Activated naive CD4-positive, alpha-beta T cell treated with anti-CD3 and anti-CD28 coated beads for 36 hours (primary cell): ENCODE measurements at regions of chr11 and their contacts with region 1.

Region 1: DNA sequence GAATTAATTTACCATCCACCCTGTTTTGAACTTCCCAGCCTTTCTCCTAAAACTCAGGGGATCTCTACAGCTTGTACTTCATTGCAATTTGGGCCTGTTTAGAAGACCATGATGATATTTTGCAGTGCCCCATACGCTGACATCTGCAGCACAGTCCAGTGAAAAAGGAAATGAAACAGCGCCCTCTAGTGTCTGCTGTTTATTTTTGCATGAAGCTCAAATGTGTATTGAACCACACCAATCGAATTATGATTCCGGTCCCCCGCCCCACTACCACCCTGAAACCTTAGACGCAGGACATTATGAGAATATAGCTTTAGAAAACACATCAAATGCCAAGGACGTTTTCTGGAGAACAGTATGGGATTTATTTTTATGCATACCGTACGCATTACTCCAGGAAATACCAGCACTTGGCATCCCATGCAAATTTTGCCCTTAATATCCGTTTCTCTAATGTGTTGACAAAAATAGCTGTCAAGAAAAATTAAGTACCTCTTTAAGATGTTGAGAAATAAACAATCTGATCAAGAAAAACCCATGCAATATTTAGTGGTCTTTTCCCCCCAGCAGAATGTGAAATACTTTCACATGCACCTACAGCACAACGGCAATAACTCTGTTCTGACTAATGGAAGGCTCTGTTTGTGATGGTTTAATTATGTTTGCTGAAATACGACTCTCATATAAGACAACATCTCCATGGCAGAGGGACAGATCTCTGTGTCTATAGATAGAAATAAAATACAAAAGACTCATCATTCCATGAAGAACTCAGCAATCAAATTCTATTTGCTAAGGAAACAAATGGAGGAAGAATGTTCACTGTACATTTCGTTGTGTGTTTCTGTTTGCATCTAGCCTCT is 93.9 kb downstream of the TECTA start:
- DNase-seq: peak; percentile 78
- H3K4me3 Mint-ChIP-seq: no peak overlapping the region
- H3K27ac Mint-ChIP-seq: no peak overlapping the region
- H3K4me1 Mint-ChIP-seq: no peaks in the 10 kb centered on the region
- H3K27me3 Mint-ChIP-seq: peaks cover 11% of the 10 kb centered on the region

Region 2: GRCh38 chr11:120929664-120930154 is 265.3 kb before region 1 on chr11:
- CTCF ChIA-PET with region 1: interaction called, 10 read pairs
- intact Hi-C with region 1: loop called (anchors 1 kb)
- DNase-seq: peak; percentile 64
- H3K4me3 Mint-ChIP-seq: no peak overlapping the region
- H3K27ac Mint-ChIP-seq: no peak overlapping the region
- H3K4me1 Mint-ChIP-seq: no peaks in the 10 kb centered on the region
- H3K27me3 Mint-ChIP-seq: peaks cover 2% of the 10 kb centered on the region

Region 3: GRCh38 chr11:120945042-120945441 is 249.9 kb before region 1 on chr11:
- CTCF ChIA-PET with region 1: interaction called, 6 read pairs
- intact Hi-C with region 1: loop called (anchors 1 kb)
- DNase-seq: no peak
- H3K4me3 Mint-ChIP-seq: no peak overlapping the region
- H3K27ac Mint-ChIP-seq: no peak overlapping the region
- H3K4me1 Mint-ChIP-seq: no peaks in the 10 kb centered on the region
- H3K27me3 Mint-ChIP-seq: peaks cover 21% of the 10 kb centered on the region

Region 4: GRCh38 chr11:121112498-121113455 is 82.2 kb before region 1 on chr11:
- CTCF ChIA-PET with region 1: interaction called, 4 read pairs
- intact Hi-C with region 1: loop called (anchors 5 kb)
- DNase-seq: peak; percentile 64
- H3K4me3 Mint-ChIP-seq: no peak overlapping the region
- H3K27ac Mint-ChIP-seq: no peak overlapping the region
- H3K4me1 Mint-ChIP-seq: no peaks in the 10 kb centered on the region
- H3K27me3 Mint-ChIP-seq: peaks cover 12% of the 10 kb centered on the region

Region 5: DNA sequence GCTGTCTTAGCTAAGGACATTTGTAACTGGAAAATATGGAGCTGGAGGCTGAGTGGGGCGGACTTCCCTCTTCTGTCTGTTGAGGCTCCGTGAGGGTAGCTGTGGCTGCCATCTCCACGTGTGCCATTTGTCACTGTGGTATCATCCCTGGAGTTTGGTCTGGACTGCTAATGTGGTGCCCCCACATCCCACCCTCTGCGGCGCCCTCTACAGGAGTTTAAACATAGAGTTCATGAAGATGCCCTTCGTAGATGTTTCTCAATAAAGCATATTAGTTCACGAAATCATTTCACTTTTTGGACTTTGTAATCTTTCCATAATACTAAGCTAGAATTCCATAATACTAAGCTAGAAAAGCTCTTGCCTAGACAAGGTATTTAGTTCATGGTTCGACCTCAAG is 41.5 kb before region 1 on chr11:
- CTCF ChIA-PET with region 1: interaction called, 12 read pairs
- intact Hi-C with region 1: no loop called
- DNase-seq: no peak
- H3K4me3 Mint-ChIP-seq: no peak overlapping the region
- H3K27ac Mint-ChIP-seq: no peak overlapping the region
- H3K4me1 Mint-ChIP-seq: no peaks in the 10 kb centered on the region
- H3K27me3 Mint-ChIP-seq: no peaks in the 10 kb centered on the region

Region 6: DNA sequence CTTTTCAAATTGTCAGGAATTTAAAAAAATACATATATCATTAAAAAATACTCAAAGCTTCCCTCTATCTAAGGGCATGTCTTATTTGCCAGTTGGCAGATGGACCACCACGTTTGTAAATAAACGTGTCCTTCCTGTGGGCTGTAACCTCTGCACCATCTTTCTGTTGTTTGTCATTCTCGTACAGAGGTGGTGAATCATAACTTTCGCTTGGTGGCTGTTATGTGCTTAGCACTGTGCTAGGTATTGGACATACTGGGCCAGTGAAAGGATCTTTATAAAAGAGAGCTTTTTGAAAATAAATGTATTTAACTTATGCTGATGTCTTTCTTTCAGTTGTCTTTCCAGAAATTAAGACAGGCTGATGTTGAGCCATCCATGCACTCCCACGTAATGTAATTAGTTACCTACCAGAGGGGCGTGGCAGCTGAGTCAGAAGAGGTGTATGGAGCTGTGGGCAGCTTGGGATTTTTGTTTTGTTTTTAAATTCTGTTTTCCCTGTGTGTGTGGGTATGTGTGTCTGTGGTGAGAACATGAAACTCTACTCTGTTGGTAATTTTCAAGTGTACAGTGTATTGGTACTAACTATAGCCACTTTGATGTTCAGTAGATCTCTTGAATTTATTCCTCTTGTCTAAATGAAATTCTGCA is 31.2 kb before region 1 on chr11:
- CTCF ChIA-PET with region 1: interaction called, 11 read pairs
- intact Hi-C with region 1: no loop called
- DNase-seq: no peak
- H3K4me3 Mint-ChIP-seq: no peak overlapping the region
- H3K27ac Mint-ChIP-seq: no peak overlapping the region
- H3K4me1 Mint-ChIP-seq: no peaks in the 10 kb centered on the region
- H3K27me3 Mint-ChIP-seq: no peaks in the 10 kb centered on the region

Region 7: DNA sequence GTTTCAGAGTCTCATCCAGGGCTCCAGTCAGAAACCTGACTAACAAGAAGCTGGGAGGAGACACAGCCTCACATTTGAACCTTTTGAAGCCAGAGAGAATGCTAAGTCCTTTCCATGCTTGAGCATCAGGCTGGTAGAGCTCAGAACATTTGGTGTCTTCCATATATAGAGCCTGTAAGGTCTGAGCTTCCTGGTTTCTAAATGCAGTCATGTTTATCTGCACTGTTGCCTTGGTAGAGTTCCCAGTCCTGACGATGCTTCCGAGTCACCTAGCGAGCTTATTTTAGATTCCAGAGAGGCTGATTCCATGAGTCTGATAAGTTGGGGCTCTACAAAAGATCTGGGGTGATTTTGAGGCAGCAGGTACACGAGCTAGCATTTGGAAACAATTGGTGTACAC is 188.8 kb after region 1 on chr11:
- CTCF ChIA-PET with region 1: no interaction called
- intact Hi-C with region 1: no loop called
- DNase-seq: no peak
- H3K4me3 Mint-ChIP-seq: no peak overlapping the region
- H3K27ac Mint-ChIP-seq: no peak overlapping the region
- H3K4me1 Mint-ChIP-seq: peaks cover 16% of the 10 kb centered on the region
- H3K27me3 Mint-ChIP-seq: no peaks in the 10 kb centered on the region